ENCODE measurements at regions of chr1 and their contacts with region 1.

Region 1: GRCh38 chr1:95084317-95085176 is 11.8 kb upstream of the ALG14 start:
- DNase-seq: no peak
- H3K4me3 ChIP-seq: no peak overlapping the region
- H3K27me3 ChIP-seq: no peaks in the 10 kb centered on the region
- CTCF ChIP-seq: peak; percentile 59

Region 2: GRCh38 chr1:95072532-95073419 is 11.8 kb before region 1 on chr1 and contains the start of gene ALG14:
- CTCF ChIA-PET with region 1: interaction called, 17 read pairs
- POLR2A ChIA-PET with region 1: interaction called, 3 read pairs
- DNase-seq: peak; percentile 78
- H3K4me3 ChIP-seq: peak within 1 kb of the TSS; percentile 72
- H3K27me3 ChIP-seq: peaks cover under 1% of the 10 kb centered on the region
- CTCF ChIP-seq: no peak
- polyA plus RNA-seq, gene ALG14: 2.3 and 4.4 TPM in 2 replicates

Region 3: GRCh38 chr1:95095833-95096217 is 11.3 kb after region 1 on chr1:
- CTCF ChIA-PET with region 1: interaction called, 11 read pairs
- POLR2A ChIA-PET with region 1: no interaction called
- DNase-seq: no peak
- H3K4me3 ChIP-seq: no peak overlapping the region
- H3K27me3 ChIP-seq: no peaks in the 10 kb centered on the region; the same call in none of the 2 replicates
- CTCF ChIP-seq: no peak

Region 4: GRCh38 chr1:95154096-95154495 is 69.5 kb after region 1 on chr1:
- CTCF ChIA-PET with region 1: no interaction called
- POLR2A ChIA-PET with region 1: no interaction called
- DNase-seq: no peak
- H3K4me3 ChIP-seq: no peak overlapping the region
- H3K27me3 ChIP-seq: no peaks in the 10 kb centered on the region
- CTCF ChIP-seq: no peak

Region 5: DNA sequence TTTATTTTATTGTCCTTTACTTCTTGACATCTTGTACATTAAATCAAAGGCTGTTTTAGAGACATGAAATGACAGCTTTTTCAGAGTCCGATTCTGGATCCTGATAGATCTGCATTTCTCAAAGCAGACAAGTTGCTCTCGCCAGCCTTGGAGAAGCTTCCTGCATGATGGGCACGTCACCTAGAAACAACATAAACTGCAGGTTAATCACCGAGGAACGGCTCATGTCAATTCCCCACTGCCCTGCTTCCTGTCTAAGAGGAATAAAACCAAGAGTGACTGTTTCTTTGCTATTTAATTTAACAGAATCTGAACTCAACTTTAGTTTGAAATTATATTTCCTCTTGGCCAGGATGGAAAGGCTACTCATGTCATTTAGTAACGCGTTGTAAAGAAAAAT is 226.5 kb after region 1 on chr1:
- CTCF ChIA-PET with region 1: no interaction called
- POLR2A ChIA-PET with region 1: no interaction called
- DNase-seq: no peak
- H3K4me3 ChIP-seq: no peak overlapping the region
- H3K27me3 ChIP-seq: peaks cover 1% of the 10 kb centered on the region; the same call in 1 of the 2 replicates
- CTCF ChIP-seq: no peak